ENCODE measurements at regions of chr16 and their contacts with region 1.

Region 1: DNA sequence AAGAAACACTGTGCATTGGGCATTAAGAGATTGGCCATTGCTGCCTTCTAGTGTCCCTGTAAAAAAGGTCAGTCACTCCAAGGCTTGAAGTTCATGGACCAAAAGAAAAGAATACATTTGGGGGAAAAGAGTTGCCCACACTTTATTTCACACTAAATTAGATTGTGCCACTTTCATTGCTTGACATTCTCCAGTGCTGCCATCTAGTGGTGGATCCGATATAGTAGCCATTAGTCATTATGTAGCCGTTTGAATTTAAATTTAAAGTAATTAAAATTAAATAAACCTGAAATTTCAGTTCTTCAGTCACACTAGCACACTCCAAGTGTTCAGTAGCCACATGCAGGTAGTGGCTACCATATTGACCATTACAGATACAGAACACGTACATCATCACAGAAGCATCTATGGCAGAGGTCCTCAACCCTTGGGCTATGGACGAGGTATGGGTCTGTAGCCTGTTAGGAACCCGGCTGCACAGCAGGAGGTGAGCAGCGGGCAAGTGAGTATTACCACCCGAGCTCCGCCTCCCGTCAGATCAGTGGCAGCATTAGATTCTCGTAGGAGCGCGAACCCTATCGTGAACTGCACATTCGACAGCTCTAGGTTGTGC is 21.9 kb upstream of the CDH5 start:
- H3K4me3 ChIP-seq: no peak overlapping the region
- H3K27ac ChIP-seq: no peak overlapping the region
- H3K4me1 ChIP-seq: no peaks in the 10 kb centered on the region
- CTCF ChIP-seq: no peak

Region 2: GRCh38 chr16:66275775-66276428 is 68.7 kb before region 1 on chr16:
- CTCF ChIA-PET with region 1: interaction called, 22 read pairs
- POLR2A ChIA-PET with region 1: no interaction called
- H3K4me3 ChIP-seq: no peak overlapping the region
- H3K27ac ChIP-seq: no peak overlapping the region
- H3K4me1 ChIP-seq: no peaks in the 10 kb centered on the region
- CTCF ChIP-seq: peak; percentile 33; the same call in 1 of the 2 replicates

Region 3: GRCh38 chr16:66315210-66315825 is 29.3 kb before region 1 on chr16:
- CTCF ChIA-PET with region 1: interaction called, 21 read pairs
- POLR2A ChIA-PET with region 1: no interaction called
- H3K4me3 ChIP-seq: no peak overlapping the region
- H3K27ac ChIP-seq: no peak overlapping the region
- H3K4me1 ChIP-seq: no peaks in the 10 kb centered on the region
- CTCF ChIP-seq: peak; percentile 64; the same call in 1 of the 2 replicates

Region 4: DNA sequence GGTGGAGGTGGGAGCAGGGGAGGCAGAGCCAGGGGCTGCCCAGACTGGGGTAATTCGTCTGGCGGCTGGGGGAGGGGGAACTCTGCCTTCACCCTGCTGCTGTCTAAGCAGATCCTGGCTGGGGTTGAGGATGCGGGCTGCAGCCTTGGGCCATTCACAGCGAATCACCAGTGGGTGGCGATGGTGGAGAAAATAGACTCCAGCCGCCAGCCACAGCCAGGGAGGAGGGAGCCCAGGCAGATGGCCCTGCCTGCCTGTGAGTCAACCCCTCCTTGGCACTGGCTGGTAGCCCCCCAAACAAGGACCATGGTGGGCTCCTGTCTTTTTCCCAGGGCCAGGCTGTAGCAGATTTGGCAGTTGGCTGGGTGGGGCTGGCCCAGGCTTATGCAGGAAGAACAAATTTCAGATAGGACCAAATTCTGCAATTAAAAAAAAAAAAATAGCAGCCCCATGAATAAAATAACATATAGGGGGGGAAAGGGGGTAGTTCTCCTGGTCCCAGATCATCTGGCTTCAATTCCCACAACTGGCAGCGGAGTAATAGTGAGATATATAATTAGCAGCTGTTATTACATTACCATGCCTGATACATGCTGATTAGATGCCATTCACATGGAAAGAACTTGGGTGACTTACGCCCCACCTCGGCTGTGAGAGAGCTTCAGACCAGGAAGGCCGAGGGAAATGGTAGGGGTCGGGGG is 19.7 kb before region 1 on chr16:
- CTCF ChIA-PET with region 1: interaction called, 26 read pairs
- POLR2A ChIA-PET with region 1: no interaction called
- H3K4me3 ChIP-seq: no peak overlapping the region
- H3K27ac ChIP-seq: no peak overlapping the region
- H3K4me1 ChIP-seq: no peaks in the 10 kb centered on the region
- CTCF ChIP-seq: peak; percentile 63; the same call in 1 of the 2 replicates

Region 5: DNA sequence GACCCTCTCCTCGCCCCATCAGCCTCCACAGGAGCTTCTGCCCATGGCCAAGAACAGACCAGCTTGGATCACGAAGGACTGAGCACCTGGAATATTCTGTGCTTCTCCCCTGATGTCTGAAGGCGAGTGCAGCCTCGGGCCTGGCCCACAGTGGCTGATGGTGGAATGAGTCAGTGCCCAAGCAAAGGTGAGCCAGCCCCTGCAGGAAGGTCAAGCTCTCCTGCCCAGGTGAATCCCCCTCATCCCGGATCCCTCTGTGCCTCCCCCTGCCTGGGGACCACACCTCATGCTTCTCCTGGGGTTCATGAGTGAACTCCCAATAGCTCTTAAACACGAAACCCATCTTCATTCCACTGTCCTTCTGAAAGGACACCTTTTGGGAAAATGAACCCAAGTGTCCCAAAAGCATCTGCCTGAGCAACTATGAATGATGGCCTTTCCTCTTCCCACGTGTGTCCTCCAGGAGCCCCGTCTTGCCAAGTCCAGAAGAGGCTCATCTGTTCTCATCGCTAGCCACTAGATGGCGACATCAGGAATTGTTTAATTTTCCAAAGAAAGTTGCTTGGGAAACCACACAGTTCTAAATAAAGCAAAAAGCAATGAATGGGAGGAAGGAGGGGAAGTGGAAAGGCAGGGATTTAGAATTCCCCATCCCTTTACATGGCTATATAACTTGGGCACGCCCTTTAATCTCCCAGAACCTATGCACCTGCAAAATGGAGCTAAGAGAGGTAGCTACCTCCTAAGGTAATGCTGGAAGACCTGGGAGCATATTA is 12.7 kb after region 1 on chr16:
- CTCF ChIA-PET with region 1: interaction called, 66 read pairs
- POLR2A ChIA-PET with region 1: no interaction called
- H3K4me3 ChIP-seq: no peak overlapping the region
- H3K27ac ChIP-seq: no peak overlapping the region
- H3K4me1 ChIP-seq: no peaks in the 10 kb centered on the region
- CTCF ChIP-seq: peak; percentile 30; the same call in 1 of the 2 replicates

Region 6: GRCh38 chr16:66364117-66364967 is 19.7 kb after region 1 on chr16:
- CTCF ChIA-PET with region 1: interaction called, 29 read pairs
- POLR2A ChIA-PET with region 1: no interaction called
- H3K4me3 ChIP-seq: no peak overlapping the region
- H3K27ac ChIP-seq: no peak overlapping the region
- H3K4me1 ChIP-seq: no peaks in the 10 kb centered on the region
- CTCF ChIP-seq: no peak

Region 7: DNA sequence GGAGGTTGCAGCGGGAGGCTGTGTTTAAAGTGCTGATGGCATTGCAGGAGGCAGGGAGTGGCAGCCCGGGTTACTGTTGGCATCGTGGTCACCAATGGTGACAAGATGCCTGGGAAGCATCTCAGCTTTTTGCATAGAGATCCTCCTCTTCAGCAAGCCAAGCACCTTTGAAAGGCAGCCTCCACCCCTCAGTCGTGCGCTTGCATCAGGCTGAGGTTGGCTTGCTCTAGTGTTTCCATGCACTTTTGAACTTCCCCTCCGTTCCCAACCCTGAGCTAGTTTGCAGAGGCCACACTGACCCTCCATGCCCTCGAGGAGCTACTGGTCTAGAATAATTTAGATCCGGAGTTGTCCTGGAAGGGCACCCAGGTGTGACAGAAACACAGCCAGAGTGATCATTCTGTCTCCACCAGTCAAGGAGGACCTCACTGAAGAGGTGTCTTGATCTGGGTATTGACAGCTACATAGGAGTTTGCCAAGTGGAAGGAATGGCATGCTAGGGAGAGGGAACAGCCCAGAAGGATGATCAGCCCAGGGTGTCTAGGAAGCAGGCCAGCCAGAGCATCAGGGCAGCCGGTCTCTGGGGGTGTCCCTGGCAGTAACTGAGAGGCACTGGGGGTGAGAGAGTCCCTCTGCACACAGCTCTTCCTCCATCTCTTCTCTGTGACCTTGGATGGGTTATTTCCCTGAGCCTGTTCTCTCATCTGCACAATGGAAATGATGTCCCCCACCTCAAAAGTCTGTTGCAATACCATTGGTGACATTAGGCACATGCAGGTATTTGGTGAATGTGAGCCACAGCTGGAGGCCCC is 90.2 kb after region 1 on chr16:
- CTCF ChIA-PET with region 1: no interaction called
- POLR2A ChIA-PET with region 1: no interaction called
- H3K4me3 ChIP-seq: no peak overlapping the region
- H3K27ac ChIP-seq: no peak overlapping the region
- H3K4me1 ChIP-seq: no peaks in the 10 kb centered on the region
- CTCF ChIP-seq: no peak

Region 8: GRCh38 chr16:66629856-66630255 is 285.2 kb after region 1 on chr16:
- CTCF ChIA-PET with region 1: no interaction called
- POLR2A ChIA-PET with region 1: no interaction called
- H3K4me3 ChIP-seq: no peak overlapping the region
- H3K27ac ChIP-seq: no peak overlapping the region
- H3K4me1 ChIP-seq: no peaks in the 10 kb centered on the region
- CTCF ChIP-seq: no peak

Measured in HEK293 (cell line).